ENCODE measurements at regions of chr1 and their contacts with region 1.

Region 1: GRCh38 chr1:33036526-33037503 is at the start of gene AK2:
- DNase-seq: peak; percentile 96
- ATAC-seq: peak; percentile 100
- H3K4me3 Mint-ChIP-seq: peak within 1 kb of the TSS; percentile 96
- H3K27ac Mint-ChIP-seq: peak within 1 kb of the TSS; percentile 87
- H3K4me1 Mint-ChIP-seq: peaks cover 41% of the 10 kb centered on the region
- H3K27me3 Mint-ChIP-seq: no peaks in the 10 kb centered on the region
- total RNA-seq, gene AK2: 386 to 464 TPM

Region 2: GRCh38 chr1:33014464-33015163 is 22.2 kb before region 1 on chr1:
- CTCF ChIA-PET with region 1: interaction called, 3 read pairs
- POLR2A ChIA-PET with region 1: interaction called, 12 read pairs
- intact Hi-C with region 1: no loop called
- DNase-seq: no peak
- ATAC-seq: no peak
- H3K4me3 Mint-ChIP-seq: no peak overlapping the region
- H3K27ac Mint-ChIP-seq: no peak overlapping the region
- H3K4me1 Mint-ChIP-seq: peaks cover 14% of the 10 kb centered on the region
- H3K27me3 Mint-ChIP-seq: no peaks in the 10 kb centered on the region